ENCODE measurements at regions of chr1 and their contacts with region 1.

Region 1: GRCh38 chr1:225329041-225329440 is 98.8 kb downstream of the LBR start:
- DNase-seq: no peak
- ATAC-seq: no peak
- H3K4me3 ChIP-seq: no peak overlapping the region
- H3K27ac ChIP-seq: no peak overlapping the region
- H3K4me1 ChIP-seq: no peaks in the 10 kb centered on the region
- H3K27me3 ChIP-seq: no peaks in the 10 kb centered on the region
- CTCF ChIP-seq: no peak

Region 2: GRCh38 chr1:225813214-225813964 is 484.3 kb after region 1 on chr1:
- CTCF ChIA-PET with region 1: interaction called, 10 read pairs
- POLR2A ChIA-PET with region 1: no interaction called
- in situ Hi-C with region 1: no loop called
- intact Hi-C with region 1: no loop called
- DNase-seq: no peak
- ATAC-seq: no peak
- H3K4me3 ChIP-seq: no peak overlapping the region
- H3K27ac ChIP-seq: peak overlapping the region; percentile 51
- H3K4me1 ChIP-seq: peaks cover 56% of the 10 kb centered on the region
- H3K27me3 ChIP-seq: no peaks in the 10 kb centered on the region
- CTCF ChIP-seq: no peak